ENCODE measurements at regions of chr18 and their contacts with region 1.

Region 1: DNA sequence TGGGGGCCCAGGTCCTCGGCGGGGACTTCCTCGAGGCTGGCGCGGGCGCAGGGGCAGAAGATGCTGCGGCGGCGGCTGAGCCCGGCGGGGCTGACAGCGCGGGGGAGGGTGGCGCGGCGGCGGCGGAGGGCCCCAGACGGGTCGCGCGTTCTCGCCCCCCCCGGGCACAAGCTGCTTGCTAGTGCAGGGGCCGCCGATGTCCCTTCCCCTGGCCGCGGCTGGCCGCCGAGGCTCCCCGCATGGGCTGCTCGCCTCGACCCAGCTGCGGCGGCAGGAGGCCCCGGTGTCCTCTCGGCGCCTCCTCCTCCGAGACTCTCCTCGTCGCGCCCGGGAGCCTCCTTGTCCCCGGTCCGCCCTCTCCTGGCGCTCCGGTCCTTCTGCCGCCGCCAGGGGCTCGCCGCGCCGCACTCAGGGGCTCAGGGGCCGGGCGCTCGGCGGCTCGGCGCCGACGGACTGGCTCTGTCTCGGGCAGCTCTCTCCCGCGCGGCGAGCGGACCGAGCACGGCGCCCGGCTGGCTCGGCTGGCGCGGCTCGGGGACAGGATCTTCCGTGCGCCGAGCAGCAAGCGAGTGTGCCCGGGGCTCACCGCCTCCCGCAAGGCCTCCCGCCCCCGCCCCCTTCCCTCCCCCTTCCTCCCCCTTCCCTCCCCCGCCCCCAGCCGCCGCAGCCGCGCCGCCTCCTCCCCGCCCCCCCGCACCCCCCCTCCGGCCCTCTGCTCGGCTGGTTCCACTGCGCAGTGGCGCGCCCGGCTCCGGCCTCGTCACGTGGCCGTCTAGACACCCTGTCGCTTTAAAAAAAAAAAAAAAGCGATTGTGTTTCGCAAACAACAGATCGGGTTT is 902 bp upstream of the SMAD7 start:
- DNase-seq: peak; percentile 89 to 93 (median 90)
- H3K4me3 ChIP-seq: peak overlapping the region; percentile 58 to 93 (median 79)
- H3K4me3 Mint-ChIP-seq: peak overlapping the region; percentile 94 to 95
- H3K27ac ChIP-seq: peak overlapping the region; percentile 97
- H3K27ac Mint-ChIP-seq: peak overlapping the region; percentile 97 to 99 (median 98)
- H3K4me1 ChIP-seq: peaks cover 26 to 44% of the 10 kb centered on the region in 2 donors
- H3K4me1 Mint-ChIP-seq: peaks cover 40% of the 10 kb centered on the region
- H3K27me3 ChIP-seq: peaks cover 0 to 2% of the 10 kb centered on the region in 2 donors
- H3K27me3 Mint-ChIP-seq: peaks cover 6 to 17% (median 12%) of the 10 kb centered on the region in 3 donors
- CTCF ChIP-seq: peak; percentile 10

Region 2: DNA sequence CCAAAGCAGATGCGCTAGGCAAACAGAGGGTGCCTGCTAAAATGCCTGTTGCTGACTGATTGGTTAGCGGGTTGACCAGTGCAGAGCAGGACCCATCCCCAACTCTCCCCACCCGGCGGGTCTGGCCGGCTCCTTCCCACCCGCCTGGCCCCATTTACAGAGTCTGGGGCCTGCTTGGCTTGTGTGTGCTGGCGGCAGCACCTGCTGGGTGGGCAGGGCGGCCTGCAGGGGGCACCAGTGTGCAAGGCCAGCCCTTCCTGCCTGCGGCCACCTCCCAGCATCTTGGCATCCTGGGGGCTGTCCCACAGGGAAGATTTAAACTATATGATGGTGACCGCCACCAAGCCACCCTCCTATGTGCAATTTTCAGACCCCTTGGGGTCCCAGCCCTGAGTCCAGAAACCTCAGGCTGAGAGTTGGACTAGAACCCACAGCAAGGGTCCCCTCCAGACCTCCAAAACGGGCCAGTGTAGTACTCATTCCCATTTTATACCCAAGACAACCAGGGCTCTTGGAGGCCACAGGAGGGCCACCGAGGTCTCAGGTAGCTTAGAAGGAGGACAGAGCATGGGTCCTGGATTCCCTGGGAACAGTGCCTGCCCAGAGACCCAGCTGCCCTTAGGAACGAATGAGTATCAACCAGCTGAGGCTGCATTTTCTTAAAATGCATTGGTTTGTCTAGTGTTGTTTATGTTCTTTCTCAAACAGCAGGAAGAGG is 174.5 kb before region 1 on chr18:
- intact Hi-C with region 1: loop called in 1 of 2 experiments (anchors 10 kb)
- DNase-seq: peak; percentile 40 to 64 (median 63)
- H3K4me3 ChIP-seq: no peak overlapping the region
- H3K4me3 Mint-ChIP-seq: no peak overlapping the region
- H3K27ac ChIP-seq: no peak overlapping the region
- H3K27ac Mint-ChIP-seq: no peak overlapping the region
- H3K4me1 ChIP-seq: peaks cover 21 to 40% of the 10 kb centered on the region in 2 donors
- H3K4me1 Mint-ChIP-seq: peaks cover 31% of the 10 kb centered on the region
- H3K27me3 ChIP-seq: no peaks in the 10 kb centered on the region
- H3K27me3 Mint-ChIP-seq: peaks cover 4 to 17% (median 12%) of the 10 kb centered on the region in 3 donors
- CTCF ChIP-seq: peak; percentile 92

Region 3: GRCh38 chr18:48896690-48897511 is 54.8 kb before region 1 on chr18:
- intact Hi-C with region 1: loop called (anchors 5 kb)
- DNase-seq: peak; percentile 99 to 100 (median 100)
- H3K4me3 ChIP-seq: peak overlapping the region in 1 of 3 experiments; percentile 50
- H3K4me3 Mint-ChIP-seq: peak overlapping the region; percentile 56 to 74
- H3K27ac ChIP-seq: peak overlapping the region; percentile 90 to 93
- H3K27ac Mint-ChIP-seq: peak overlapping the region; percentile 93 to 99 (median 97)
- H3K4me1 ChIP-seq: peaks cover 43 to 47% of the 10 kb centered on the region in 2 donors
- H3K4me1 Mint-ChIP-seq: peaks cover 48% of the 10 kb centered on the region
- H3K27me3 ChIP-seq: no peaks in the 10 kb centered on the region
- H3K27me3 Mint-ChIP-seq: no peaks in the 10 kb centered on the region
- CTCF ChIP-seq: peak; percentile 55

Region 4: DNA sequence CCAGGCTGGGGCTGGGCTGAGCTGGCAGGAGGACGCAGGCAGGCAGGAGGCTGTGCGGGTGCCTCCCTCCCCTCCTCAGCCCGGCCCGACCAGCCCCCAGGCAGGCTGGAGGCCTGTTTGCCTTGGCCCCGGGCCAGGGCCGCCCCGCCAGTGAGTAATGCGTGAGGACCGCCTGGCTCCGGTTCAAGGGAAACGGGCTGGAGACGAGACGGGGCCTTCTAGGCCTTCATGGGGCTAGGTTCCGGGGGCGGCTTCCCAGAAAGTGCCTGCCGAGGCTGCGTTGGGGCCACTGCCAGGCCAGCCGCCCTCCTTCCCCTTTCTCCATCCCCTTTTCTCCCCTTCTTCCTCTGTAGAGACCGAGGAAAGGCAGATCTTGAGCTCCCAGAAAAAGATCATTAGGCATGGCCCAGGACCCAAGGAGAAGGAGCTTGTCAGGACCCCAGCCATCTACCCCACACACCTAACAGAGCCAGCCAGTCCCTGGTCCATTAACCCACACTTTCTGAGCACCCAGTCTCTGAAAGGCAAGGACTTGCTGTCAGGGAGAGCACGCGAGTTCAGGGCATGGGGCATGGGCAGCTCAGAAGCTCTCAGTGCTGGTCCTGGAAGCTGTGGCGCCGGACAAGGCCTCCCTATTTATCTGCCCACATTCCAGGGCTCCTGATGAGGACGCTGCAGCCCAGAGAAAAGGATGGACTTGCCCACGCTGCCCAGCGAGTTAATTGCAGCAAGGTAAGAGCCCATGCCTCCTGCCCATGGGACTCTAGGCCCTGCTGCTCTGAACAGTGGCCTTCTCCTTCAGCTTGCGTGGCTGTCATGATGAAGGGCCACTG is 49.4 kb before region 1 on chr18:
- intact Hi-C with region 1: loop called (anchors 5 kb)
- DNase-seq: peak; percentile 63 to 86 (median 66)
- H3K4me3 ChIP-seq: peak overlapping the region in 1 of 3 experiments; percentile 8
- H3K4me3 Mint-ChIP-seq: peak overlapping the region in 1 of 2 donors; percentile 42
- H3K27ac ChIP-seq: peak overlapping the region; percentile 25 to 61
- H3K27ac Mint-ChIP-seq: peak overlapping the region; percentile 32 to 90 (median 73)
- H3K4me1 ChIP-seq: peaks cover 32 to 44% of the 10 kb centered on the region in 2 donors
- H3K4me1 Mint-ChIP-seq: peaks cover 46% of the 10 kb centered on the region
- H3K27me3 ChIP-seq: no peaks in the 10 kb centered on the region
- H3K27me3 Mint-ChIP-seq: peaks cover 2 to 6% (median 3%) of the 10 kb centered on the region in 3 donors
- CTCF ChIP-seq: no peak

Region 5: DNA sequence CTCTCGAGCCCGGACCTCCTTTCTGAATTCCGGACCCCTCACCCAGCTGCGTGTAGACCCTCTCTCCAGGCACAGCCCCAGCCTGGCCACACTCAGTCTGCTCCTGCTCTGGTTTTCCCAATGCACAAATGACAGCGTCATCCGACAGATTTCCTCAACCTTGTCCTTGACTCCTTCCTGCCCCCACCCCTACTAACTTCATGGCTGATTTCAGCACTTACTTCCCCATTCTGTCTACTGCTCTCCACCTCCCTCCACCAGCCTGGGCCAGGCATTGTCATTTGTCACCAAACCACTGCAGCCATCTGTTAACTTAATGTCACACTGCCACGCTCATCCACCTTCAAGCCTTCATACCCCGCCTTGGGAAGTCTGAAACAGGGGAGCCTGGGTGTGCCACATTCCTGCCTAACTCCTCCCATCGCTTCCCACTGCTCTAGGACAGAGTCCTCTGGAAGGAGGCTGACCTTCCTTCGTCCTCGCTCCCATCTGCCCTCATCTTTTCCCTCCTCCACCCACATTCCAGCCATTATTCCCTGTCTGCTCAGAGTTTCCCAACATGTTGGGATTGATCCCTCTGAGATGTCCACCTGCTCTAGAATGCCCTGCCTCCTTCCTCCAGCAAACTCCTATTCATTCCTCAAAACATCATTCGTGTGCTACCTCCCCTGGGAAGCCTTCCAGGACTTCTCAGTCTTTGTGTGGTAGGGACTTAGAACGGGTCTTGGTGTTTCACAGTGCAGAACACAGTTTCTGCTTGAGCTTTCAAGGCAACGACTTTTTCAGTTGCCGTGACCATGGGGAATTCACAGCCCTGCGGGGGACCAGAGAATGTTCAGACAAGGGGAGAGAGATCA is 41.3 kb after region 1 on chr18:
- intact Hi-C with region 1: loop called (anchors 5 kb)
- DNase-seq: peak; percentile 89 to 97 (median 97)
- H3K4me3 ChIP-seq: peak overlapping the region in 1 of 3 experiments; percentile 35
- H3K4me3 Mint-ChIP-seq: peak overlapping the region; percentile 69 to 92
- H3K27ac ChIP-seq: peak overlapping the region; percentile 74 to 87
- H3K27ac Mint-ChIP-seq: peak overlapping the region; percentile 96 to 99 (median 98)
- H3K4me1 ChIP-seq: peaks cover 32 to 42% of the 10 kb centered on the region in 2 donors
- H3K4me1 Mint-ChIP-seq: peaks cover 42% of the 10 kb centered on the region
- H3K27me3 ChIP-seq: no peaks in the 10 kb centered on the region
- H3K27me3 Mint-ChIP-seq: peaks cover 0 to 16% (median 6%) of the 10 kb centered on the region in 3 donors
- CTCF ChIP-seq: no peak

Region 6: DNA sequence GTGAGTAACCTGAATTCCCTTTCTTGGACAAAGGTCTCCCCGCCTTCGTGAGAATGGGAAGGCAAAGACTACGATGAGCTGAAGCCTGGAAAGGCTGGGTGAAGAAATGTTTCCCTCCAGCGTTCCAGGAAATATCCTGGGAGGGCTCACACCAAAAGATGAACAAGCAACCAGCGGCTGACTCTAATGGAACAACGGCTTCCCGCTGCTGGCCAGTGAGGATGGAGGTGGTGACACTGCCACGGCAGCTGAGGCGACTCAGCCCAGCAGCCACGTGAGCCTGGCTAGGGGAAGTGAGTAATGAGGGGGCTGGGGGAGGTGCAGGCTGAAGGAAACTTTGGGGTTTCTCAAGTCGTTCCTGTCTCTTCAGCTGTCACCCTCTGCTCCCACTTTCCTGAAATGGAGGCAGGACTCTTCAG is 104.1 kb after region 1 on chr18:
- intact Hi-C with region 1: loop called in 1 of 2 experiments (anchors 10 kb)
- DNase-seq: peak; percentile 89 to 98 (median 94)
- H3K4me3 ChIP-seq: peak overlapping the region in 2 of 3 experiments; percentile 4 to 62
- H3K4me3 Mint-ChIP-seq: peak overlapping the region; percentile 72 to 89
- H3K27ac ChIP-seq: peak overlapping the region; percentile 41 to 87
- H3K27ac Mint-ChIP-seq: peak overlapping the region; percentile 88 to 94 (median 92)
- H3K4me1 ChIP-seq: peaks cover 34% of the 10 kb centered on the region in 2 donors
- H3K4me1 Mint-ChIP-seq: peaks cover 35% of the 10 kb centered on the region
- H3K27me3 ChIP-seq: no peaks in the 10 kb centered on the region
- H3K27me3 Mint-ChIP-seq: peaks cover 0 to 13% (median 2%) of the 10 kb centered on the region in 3 donors
- CTCF ChIP-seq: no peak

Region 7: DNA sequence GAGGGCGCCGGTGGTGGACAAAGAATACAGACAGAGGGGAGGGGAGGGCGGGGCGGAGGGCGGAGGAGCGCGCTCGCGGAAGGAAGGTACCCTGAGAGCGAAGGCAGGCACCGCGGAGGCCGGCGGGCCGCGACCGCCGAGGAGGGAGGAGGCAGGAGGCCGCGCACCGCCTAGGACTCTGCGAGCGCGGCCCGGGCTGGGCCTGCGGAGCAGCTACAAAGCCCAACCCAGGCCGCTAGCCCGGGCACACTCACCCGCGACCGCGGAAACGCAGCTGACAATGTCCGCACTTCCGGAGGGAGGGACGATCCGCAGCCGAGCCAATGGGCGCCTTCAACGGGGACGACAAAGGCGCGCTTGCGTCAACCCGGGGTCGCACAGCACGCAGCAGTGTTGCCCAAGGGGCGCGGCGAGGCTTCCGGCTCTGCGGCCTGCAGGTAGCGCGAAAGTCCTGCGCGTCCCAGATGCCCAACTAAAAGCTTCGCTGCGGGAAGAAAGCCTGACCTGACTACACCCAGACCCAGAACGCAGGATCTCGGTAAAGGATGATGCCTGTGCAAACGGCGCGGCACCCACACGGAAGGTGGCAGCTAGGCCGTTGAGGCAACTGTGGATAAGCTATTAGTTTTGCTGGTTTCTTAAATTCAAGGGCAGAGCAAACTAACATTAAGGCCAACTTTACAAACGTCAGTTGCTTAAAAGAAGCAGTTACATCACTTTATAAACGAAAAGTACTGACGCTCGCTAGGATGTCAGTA is 535.5 kb after region 1 on chr18 and contains the start of gene C18orf32:
- intact Hi-C with region 1: loop called in 1 of 2 experiments (anchors 10 kb)
- DNase-seq: peak; percentile 90 to 93 (median 90)
- H3K4me3 ChIP-seq: peak within 1 kb of the TSS; percentile 66 to 93 (median 91)
- H3K4me3 Mint-ChIP-seq: peak within 1 kb of the TSS; percentile 97 to 98
- H3K27ac ChIP-seq: peak within 1 kb of the TSS; percentile 87 to 94
- H3K27ac Mint-ChIP-seq: peak within 1 kb of the TSS; percentile 96 to 100 (median 99)
- H3K4me1 ChIP-seq: peaks cover 31 to 39% of the 10 kb centered on the region in 2 donors
- H3K4me1 Mint-ChIP-seq: peaks cover 39% of the 10 kb centered on the region
- H3K27me3 ChIP-seq: no peaks in the 10 kb centered on the region
- H3K27me3 Mint-ChIP-seq: no peaks in the 10 kb centered on the region
- CTCF ChIP-seq: no peak
- polyA plus RNA-seq, gene C18orf32: 27.5 to 134 (median 115) TPM